Transverse colon (tissue), 4 donors: ENCODE measurements at regions of chr20 and their contacts with region 1.

Region 1: GRCh38 chr20:54093423-54094267 is 23.3 kb upstream of the BCAS1 start:
- DNase-seq: no peak
- H3K4me3 ChIP-seq: no peak overlapping the region
- H3K27ac ChIP-seq: no peak overlapping the region
- H3K4me1 ChIP-seq: no peaks in the 10 kb centered on the region
- H3K27me3 ChIP-seq: no peaks in the 10 kb centered on the region
- CTCF ChIP-seq: no peak
- EP300 ChIP-seq: no peak
- POLR2A ChIP-seq: no peak

Region 2: GRCh38 chr20:54199721-54200176 is 106.1 kb after region 1 on chr20:
- in situ Hi-C with region 1: loop called in 1 of 4 experiments (anchors 5 kb)
- intact Hi-C with region 1: loop called (anchors 5 kb)
- DNase-seq: peak; percentile 85
- H3K4me3 ChIP-seq: no peak overlapping the region
- H3K27ac ChIP-seq: no peak overlapping the region
- H3K4me1 ChIP-seq: peaks cover 0 to 15% (median 6%) of the 10 kb centered on the region in 4 donors
- H3K27me3 ChIP-seq: no peaks in the 10 kb centered on the region
- CTCF ChIP-seq: peak; percentile 86 to 90 (median 89)
- EP300 ChIP-seq: no peak
- POLR2A ChIP-seq: no peak

Region 3: GRCh38 chr20:54305421-54305820 is 211.8 kb after region 1 on chr20:
- in situ Hi-C with region 1: no loop called
- intact Hi-C with region 1: no loop called
- DNase-seq: no peak
- H3K4me3 ChIP-seq: no peak overlapping the region
- H3K27ac ChIP-seq: no peak overlapping the region
- H3K4me1 ChIP-seq: no peaks in the 10 kb centered on the region
- H3K27me3 ChIP-seq: no peaks in the 10 kb centered on the region
- CTCF ChIP-seq: no peak
- EP300 ChIP-seq: no peak
- POLR2A ChIP-seq: no peak

Region 4: GRCh38 chr20:54340667-54341081 is 247.0 kb after region 1 on chr20:
- in situ Hi-C with region 1: no loop called
- intact Hi-C with region 1: no loop called
- DNase-seq: no peak
- H3K4me3 ChIP-seq: no peak overlapping the region
- H3K27ac ChIP-seq: no peak overlapping the region
- H3K4me1 ChIP-seq: peaks cover 0 to 14% (median 7%) of the 10 kb centered on the region in 4 donors
- H3K27me3 ChIP-seq: no peaks in the 10 kb centered on the region
- CTCF ChIP-seq: no peak
- EP300 ChIP-seq: no peak
- POLR2A ChIP-seq: no peak

Region 5: DNA sequence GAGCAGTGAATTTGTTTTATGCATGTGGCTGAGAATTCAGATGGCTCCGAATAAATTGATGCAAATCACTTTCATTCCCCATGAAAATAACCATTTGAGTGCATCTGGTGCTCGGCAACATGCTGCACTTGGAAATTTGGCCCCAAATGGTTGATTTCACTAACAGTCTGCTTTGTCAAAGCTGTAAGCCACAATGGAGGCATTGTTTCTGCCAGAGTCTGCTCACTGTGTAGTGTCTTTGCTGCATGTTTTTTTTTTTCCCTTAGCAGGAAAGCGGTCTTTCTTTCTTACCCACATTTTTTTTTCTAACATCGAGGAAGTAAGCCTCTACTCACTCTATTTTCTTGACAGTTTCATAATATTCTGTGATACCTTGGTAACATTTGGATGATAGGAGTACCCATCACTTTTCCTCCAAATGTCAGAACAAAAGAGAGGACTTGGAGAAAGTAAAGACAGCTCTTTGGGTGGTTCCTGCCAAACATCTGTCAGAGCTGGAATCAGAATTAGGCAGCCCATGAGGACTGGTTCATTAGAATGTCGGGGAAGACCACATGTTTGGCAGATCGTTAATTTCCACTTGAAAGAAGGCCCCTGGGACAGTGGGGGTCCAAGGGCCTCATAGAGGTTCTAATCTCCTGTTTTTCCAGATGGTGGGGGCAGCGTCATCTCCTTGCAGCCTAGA is 531.2 kb after region 1 on chr20:
- in situ Hi-C with region 1: loop called in 1 of 4 experiments (anchors 25 kb)
- intact Hi-C with region 1: loop called (anchors 5 kb)
- DNase-seq: no peak
- H3K4me3 ChIP-seq: no peak overlapping the region
- H3K27ac ChIP-seq: no peak overlapping the region
- H3K4me1 ChIP-seq: no peaks in the 10 kb centered on the region
- H3K27me3 ChIP-seq: no peaks in the 10 kb centered on the region
- CTCF ChIP-seq: no peak
- EP300 ChIP-seq: no peak
- POLR2A ChIP-seq: no peak

Region 6: GRCh38 chr20:54649511-54649962 is 555.9 kb after region 1 on chr20:
- in situ Hi-C with region 1: loop called in 2 of 4 experiments (anchors 10 to 25 kb)
- intact Hi-C with region 1: no loop called
- DNase-seq: peak; percentile 77
- H3K4me3 ChIP-seq: no peak overlapping the region
- H3K27ac ChIP-seq: no peak overlapping the region
- H3K4me1 ChIP-seq: no peaks in the 10 kb centered on the region
- H3K27me3 ChIP-seq: peaks cover 7% of the 10 kb centered on the region
- CTCF ChIP-seq: peak; percentile 51 to 79 (median 74)
- EP300 ChIP-seq: no peak
- POLR2A ChIP-seq: no peak